Lower leg skin (tissue), 4 donors: ENCODE measurements at regions of chr1 and their contacts with region 1.

Region 1: GRCh38 chr1:87600850-87601248 is 272.2 kb downstream of the LMO4 start:
- DNase-seq: no peak
- H3K4me3 ChIP-seq: no peak overlapping the region
- CTCF ChIP-seq: no peak
- POLR2A ChIP-seq: no peak

Region 2: DNA sequence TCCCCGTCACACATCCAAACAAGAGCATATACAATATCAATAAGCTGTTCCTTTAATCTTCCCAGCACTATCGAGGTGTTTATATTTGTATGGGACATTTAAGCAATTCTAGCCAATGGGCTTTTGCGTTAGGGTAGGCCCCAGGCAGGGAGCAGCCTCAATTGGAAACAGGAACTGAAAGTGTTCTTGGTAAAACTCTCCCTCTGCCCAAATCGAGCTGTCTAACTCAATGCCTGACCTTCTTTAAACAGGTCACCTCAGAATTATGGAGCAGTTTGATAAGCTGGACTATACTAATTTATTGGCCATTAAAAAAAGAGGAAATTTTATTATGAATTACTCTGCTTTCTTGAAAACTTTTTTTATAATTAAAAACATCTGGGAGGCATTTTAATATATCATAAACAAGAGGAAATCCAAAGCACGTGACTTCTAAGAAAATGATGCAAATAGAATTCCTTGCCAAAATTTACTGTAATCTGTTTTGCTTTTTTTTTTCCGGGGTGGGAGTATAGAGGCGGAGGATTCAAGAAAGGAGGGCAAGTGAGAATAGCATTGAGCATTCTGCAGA is 225.9 kb after region 1 on chr1:
- intact Hi-C with region 1: loop called (anchors 5 kb)
- DNase-seq: peak; percentile 62 to 84
- H3K4me3 ChIP-seq: no peak overlapping the region
- CTCF ChIP-seq: no peak
- POLR2A ChIP-seq: no peak